ENCODE measurements at regions of chr1 and their contacts with region 1.

Region 1: DNA sequence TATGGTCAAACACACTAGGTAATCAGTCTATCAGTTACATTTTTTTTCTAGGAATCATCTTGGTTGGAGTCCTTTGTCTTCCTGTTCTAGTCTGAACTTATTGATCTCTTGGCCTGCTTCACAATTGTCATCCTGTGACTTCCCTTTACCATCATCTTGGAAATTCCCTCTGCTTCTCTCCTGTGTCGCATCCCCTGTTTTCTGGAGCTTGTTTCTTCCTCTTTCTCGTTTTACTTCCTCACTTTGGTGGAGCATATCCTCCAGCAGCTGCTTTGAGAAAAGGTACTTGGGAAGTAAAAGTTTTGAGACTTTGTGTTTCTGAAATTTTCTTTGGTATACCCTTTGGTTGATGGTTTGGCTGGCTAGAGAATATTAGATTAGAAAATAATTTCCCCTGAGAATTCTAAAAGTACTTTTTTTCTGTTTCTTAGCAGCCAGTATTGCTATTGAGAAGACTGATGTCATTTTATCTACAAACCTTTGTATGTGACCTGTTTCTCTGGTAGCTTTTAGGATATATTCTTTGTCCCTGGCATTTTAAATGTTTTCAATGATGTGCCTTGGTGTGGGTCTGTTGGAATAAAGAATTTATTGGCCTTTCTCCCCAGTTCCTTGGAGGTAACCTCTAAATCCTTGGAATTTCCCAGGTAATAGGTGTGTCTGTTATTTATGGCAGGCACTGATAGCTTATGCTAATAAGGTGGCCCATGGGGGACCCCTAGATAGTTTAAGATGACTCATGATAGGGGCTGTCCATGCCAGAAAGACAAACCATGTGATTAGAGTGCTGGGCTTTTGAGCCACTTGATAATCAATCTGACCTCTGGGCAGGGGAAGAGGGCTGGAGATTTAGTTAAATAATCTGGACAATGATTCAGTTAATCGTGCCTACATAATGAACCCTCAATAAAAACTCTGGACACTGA is 6.1 kb upstream of the MYCL start:
- DNase-seq: no peak
- CTCF ChIP-seq: no peak

Region 2: DNA sequence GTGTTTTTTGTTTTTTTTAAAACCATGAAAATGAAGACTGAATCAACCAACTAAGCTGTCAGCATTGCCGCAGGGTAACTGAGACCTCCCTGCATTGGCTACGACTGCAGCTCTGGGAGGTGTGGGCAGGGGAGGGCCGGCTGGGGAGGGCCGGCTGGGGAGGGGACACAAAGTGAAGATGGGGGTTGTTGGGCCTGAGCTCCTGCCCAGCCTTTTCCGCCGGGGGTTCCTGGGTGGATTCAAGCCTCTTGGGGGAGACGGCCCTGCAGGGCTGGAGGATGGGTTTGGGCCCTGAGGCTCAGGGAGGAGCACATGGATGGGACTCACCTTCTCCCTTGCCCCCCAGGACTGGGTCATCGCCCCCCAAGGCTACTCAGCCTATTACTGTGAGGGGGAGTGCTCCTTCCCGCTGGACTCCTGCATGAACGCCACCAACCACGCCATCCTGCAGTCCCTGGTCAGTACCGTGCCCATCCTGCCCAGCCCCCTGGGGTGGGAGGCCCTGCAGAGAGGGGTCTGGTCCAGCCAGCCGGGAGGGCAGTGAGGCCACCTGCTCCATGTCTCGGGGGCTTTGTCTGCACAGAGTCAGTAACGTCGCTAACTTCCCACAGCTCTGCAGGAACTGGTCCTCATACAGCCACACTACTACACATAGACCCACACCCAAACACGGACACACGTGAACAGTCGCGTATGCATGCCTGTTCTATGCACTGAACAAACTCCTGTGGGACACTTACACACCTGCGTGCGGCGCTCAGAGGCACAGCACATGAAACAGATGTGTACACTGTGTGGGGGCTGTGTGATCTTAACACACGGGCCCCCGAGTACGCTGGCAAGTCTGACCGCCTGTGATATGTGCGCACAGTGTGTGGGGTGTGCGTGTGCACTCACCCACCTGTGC is 384.9 kb before region 1 on chr1:
- in situ Hi-C with region 1: no loop called
- DNase-seq: no peak
- CTCF ChIP-seq: no peak

Region 3: GRCh38 chr1:39822091-39822490 is 85.7 kb before region 1 on chr1:
- in situ Hi-C with region 1: loop called (anchors 5 kb)
- DNase-seq: peak; percentile 1
- CTCF ChIP-seq: no peak

Measured in GM13977 (cell line).